Calu3 (cell line): ENCODE measurements at regions of chr3 and their contacts with region 1.

Region 1: DNA sequence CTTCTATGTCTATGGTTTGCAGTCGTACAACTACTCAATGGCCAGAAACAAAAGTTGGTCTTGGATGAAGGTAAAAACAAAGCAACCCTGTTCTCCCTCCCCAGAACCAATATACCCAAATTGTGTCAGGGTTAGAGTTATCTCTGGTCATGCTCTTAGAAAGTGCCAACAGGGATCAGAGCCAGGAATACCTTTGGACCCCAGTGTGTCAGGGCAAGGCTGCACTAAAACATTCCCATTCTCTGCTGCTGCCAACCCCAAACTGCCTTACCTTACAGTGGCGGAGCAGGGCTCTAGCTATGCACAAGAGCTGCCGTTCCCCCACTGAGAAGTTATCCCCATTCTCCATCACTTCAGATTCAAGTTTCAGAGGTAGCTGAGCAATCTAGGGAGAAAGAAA is 42.4 kb upstream of the PARL start:
- DNase-seq: no peak
- H3K4me3 Mint-ChIP-seq: no peak overlapping the region
- H3K27ac Mint-ChIP-seq: no peak overlapping the region
- H3K4me1 Mint-ChIP-seq: peaks cover 13% of the 10 kb centered on the region
- H3K27me3 Mint-ChIP-seq: no peaks in the 10 kb centered on the region
- CTCF ChIP-seq: no peak

Region 2: DNA sequence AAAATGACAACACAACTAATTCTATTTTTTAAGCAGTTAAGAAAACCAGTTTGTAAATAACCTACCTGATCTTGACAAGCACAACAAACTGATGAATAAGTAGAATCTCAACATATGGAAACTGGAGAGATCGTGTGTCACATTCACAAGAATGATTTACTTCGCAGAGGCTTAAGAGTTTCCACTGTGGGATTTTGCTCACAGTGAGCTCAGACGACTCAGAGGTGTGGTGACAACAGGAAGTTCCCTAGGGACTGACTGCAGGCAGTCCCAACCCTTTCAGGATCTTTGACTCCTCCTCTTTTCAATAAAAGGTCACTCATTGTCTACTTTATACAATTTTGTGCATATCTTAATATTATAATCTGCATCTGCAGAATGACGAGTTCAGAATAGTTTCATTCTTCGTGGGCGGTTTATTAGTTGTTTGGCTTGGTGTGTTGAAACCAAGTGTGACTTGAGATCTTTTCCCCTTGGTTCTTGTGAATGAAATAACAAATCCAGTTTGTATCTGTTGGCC is 1625.4 kb after region 1 on chr3 and contains the start of gene LIPH:
- CTCF ChIA-PET with region 1: interaction called, 12 read pairs
- intact Hi-C with region 1: no loop called
- DNase-seq: peak; percentile 86
- H3K4me3 Mint-ChIP-seq: peak within 1 kb of the TSS; percentile 76
- H3K27ac Mint-ChIP-seq: peak within 1 kb of the TSS; percentile 100
- H3K4me1 Mint-ChIP-seq: peaks cover 44% of the 10 kb centered on the region
- H3K27me3 Mint-ChIP-seq: no peaks in the 10 kb centered on the region
- CTCF ChIP-seq: no peak
- total RNA-seq, gene LIPH: 159 and 213 TPM in 2 replicates